Adrenal gland (tissue), 19 donors: ENCODE measurements at regions of chr11 and their contacts with region 1.

Region 1: GRCh38 chr11:114340311-114341131 is 44.3 kb downstream of the NNMT start:
- DNase-seq: peak; percentile 24 to 71 (median 54)
- H3K4me3 ChIP-seq: peak overlapping the region in 1 of 4 donors; percentile 19
- H3K27ac ChIP-seq: peak overlapping the region in 1 of 5 donors; percentile 72
- H3K4me1 ChIP-seq: peaks cover 0 to 14% of the 10 kb centered on the region in 2 donors
- H3K27me3 ChIP-seq: no peaks in the 10 kb centered on the region
- CTCF ChIP-seq: peak; percentile 64 to 81 (median 74)
- POLR2A ChIP-seq: no peak

Region 2: DNA sequence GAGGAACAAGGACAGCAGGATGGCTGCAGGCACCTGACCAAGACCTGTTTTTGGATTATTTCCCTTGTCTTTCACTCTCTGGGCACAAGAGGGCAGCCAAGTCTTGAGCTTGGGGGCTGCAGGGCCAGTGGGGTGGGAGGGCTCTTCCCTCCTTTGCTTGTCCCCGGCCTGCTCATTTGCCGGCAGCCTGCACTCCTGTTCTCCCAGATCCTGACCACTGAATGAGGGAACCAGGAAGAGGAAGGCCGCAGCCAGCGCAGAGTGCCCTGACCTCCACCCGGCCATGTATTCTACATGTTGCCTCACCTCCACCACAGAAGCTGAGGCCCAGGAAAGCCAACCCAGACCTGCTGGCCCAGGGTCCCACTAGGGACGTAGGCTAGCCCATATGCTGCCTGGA is 59.8 kb before region 1 on chr11:
- intact Hi-C with region 1: no loop called
- DNase-seq: peak in 5 of 7 donors; percentile 38 to 69 (median 51)
- H3K4me3 ChIP-seq: no peak overlapping the region
- H3K27ac ChIP-seq: peak overlapping the region in 2 of 5 donors; percentile 32 to 37
- H3K4me1 ChIP-seq: no peaks in the 10 kb centered on the region
- H3K27me3 ChIP-seq: no peaks in the 10 kb centered on the region
- CTCF ChIP-seq: peak in 4 of 6 experiments; percentile 46 to 65 (median 50)
- POLR2A ChIP-seq: no peak

Region 3: GRCh38 chr11:114439229-114440120 is 99.0 kb after region 1 on chr11 and contains the start of gene REXO2:
- intact Hi-C with region 1: no loop called
- DNase-seq: peak; percentile 94 to 98 (median 97)
- H3K4me3 ChIP-seq: peak within 1 kb of the TSS; percentile 20 to 100 (median 96)
- H3K27ac ChIP-seq: peak within 1 kb of the TSS; percentile 71 to 92 (median 86)
- H3K4me1 ChIP-seq: peaks cover 17 to 18% of the 10 kb centered on the region in 2 donors
- H3K27me3 ChIP-seq: no peaks in the 10 kb centered on the region
- CTCF ChIP-seq: peak in 4 of 6 experiments; percentile 7 to 29 (median 16)
- POLR2A ChIP-seq: peak; percentile 27 to 91
- total RNA-seq, gene REXO2: 76.6 to 211 (median 107) TPM

Region 4: DNA sequence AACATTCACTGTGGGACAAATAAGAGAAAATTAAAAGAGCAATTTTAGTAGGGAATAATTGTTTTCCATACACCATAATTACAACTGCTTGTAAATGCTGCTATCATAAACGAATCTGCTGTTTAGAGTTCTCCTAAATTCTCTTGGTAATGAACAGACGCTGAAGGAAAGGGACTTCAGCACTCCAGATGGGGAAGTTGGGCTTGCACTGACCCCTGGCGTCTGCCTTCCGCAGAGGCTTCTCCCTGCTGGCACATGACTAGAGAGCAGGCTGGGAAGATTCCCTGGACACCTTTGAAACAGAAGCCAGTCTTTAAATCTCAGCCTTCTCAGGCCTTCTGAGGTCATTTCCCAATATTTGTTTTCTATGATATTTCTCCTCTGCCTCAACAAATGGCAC is 421.9 kb after region 1 on chr11:
- intact Hi-C with region 1: loop called in 1 of 2 experiments (anchors 5 kb)
- DNase-seq: peak; percentile 52 to 86 (median 66)
- H3K4me3 ChIP-seq: no peak overlapping the region
- H3K27ac ChIP-seq: no peak overlapping the region
- H3K4me1 ChIP-seq: no peaks in the 10 kb centered on the region
- H3K27me3 ChIP-seq: peaks cover 4% of the 10 kb centered on the region
- CTCF ChIP-seq: peak; percentile 53 to 70 (median 62)
- POLR2A ChIP-seq: no peak